Left ventricle myocardium superior (tissue), 1 donor: ENCODE measurements at regions of chr2 and their contacts with region 1.

Region 1: GRCh38 chr2:41782306-41783158 is 265.3 kb upstream of the PKDCC start:
- DNase-seq: no peak
- ATAC-seq: no peak

Region 2: GRCh38 chr2:40488101-40488601 is 1294.4 kb before region 1 on chr2:
- intact Hi-C with region 1: loop called (anchors 10 kb)
- DNase-seq: no peak
- ATAC-seq: peak; percentile 47

Region 3: GRCh38 chr2:41393621-41394020 is 388.9 kb before region 1 on chr2:
- intact Hi-C with region 1: loop called (anchors 10 kb)
- DNase-seq: no peak
- ATAC-seq: no peak